Activated CD4-positive, alpha-beta T cell treated with anti-CD3 and anti-CD28 coated beads, Interleukin-2, amount 10 ng/mL, durations not matched to agents 24 days and 14 days (primary cell): ENCODE measurements at regions of chr11 and their contacts with region 1.

Region 1: DNA sequence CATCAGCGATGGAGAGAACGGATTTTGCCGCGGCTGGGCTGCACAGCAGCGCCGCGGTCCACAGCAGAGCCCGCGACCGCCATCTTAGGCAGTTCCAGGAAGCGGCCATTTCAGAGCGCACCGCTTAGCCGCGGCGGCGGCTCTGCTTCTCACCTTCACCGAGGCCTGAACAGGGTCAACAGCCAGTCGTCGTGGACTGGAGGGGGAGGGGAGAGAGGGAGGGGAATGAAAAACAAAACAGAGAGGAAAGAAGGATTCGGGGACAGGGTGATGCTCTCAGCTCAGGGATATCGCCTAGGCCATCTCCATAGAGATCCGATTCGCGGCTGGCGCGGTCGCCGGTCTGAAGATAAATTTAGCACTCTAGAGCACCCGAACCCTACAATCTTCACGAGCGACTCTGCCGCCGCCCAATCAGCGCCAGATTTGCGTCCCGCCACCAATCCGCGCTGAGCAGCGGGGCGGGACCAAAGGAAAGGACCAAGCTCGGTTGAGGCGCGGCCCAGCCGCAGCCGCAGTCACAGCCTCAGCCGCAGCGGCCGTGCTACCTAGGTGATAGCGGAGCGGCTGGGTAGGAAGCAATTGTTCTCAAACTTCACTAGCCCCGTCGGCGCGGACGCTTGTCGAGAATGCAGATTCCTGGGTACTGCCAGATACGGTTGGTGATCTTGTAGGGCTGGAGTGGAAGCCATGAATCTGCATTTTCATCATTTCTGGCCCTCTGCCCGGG is at the start of gene ZBED5:
- DNase-seq: peak; percentile 99
- H3K4me3 Mint-ChIP-seq: peak within 1 kb of the TSS; percentile 100
- H3K27ac Mint-ChIP-seq: peak within 1 kb of the TSS; percentile 100
- H3K4me1 Mint-ChIP-seq: peaks cover 35% of the 10 kb centered on the region
- H3K27me3 Mint-ChIP-seq: no peaks in the 10 kb centered on the region
- total RNA-seq, gene ZBED5: 41.8 and 43.1 TPM in 2 replicates

Region 2: DNA sequence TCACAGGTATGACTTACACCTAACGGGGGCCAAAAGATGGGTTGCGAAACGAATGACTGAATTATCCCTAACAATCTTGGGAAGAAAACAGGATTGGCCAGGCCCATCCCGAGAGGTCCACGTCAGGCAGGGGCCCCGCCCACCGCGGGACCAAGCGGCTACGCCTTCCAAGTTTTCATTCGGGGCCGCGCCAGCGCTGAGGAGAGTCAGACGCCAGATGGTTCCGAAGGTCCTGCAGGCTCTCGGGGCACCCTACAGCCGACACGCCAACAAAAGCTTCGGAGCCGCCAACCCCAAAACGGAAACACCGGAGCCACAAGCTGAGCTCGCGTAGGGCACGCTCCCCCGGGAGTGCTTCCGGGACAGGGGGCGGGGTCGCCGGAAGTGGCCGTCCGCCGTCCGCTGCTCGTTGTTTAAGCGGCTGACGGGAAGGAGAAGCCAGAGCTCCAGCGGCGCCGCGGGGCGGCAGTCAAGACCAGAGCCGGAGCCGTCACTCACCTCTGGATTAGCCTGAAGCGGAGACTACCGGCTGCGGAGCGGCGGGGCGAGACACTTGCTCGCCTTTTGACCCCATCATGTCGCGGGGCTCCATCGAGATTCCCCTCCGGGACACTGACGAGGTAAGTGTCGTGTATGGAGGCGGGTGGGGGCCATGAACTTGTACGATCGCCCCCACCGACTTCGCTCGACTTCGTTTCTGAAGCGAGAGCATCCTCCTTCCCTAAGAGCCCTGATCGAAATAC is 106.9 kb before region 1 on chr11 and contains the start of gene CTR9:
- intact Hi-C with region 1: loop called (anchors 2 kb)
- DNase-seq: peak; percentile 98
- H3K4me3 Mint-ChIP-seq: peak within 1 kb of the TSS; percentile 95
- H3K27ac Mint-ChIP-seq: peak within 1 kb of the TSS; percentile 89
- H3K4me1 Mint-ChIP-seq: peaks cover 32% of the 10 kb centered on the region
- H3K27me3 Mint-ChIP-seq: no peaks in the 10 kb centered on the region
- total RNA-seq, gene CTR9: 43.9 and 44.3 TPM in 2 replicates

Region 3: DNA sequence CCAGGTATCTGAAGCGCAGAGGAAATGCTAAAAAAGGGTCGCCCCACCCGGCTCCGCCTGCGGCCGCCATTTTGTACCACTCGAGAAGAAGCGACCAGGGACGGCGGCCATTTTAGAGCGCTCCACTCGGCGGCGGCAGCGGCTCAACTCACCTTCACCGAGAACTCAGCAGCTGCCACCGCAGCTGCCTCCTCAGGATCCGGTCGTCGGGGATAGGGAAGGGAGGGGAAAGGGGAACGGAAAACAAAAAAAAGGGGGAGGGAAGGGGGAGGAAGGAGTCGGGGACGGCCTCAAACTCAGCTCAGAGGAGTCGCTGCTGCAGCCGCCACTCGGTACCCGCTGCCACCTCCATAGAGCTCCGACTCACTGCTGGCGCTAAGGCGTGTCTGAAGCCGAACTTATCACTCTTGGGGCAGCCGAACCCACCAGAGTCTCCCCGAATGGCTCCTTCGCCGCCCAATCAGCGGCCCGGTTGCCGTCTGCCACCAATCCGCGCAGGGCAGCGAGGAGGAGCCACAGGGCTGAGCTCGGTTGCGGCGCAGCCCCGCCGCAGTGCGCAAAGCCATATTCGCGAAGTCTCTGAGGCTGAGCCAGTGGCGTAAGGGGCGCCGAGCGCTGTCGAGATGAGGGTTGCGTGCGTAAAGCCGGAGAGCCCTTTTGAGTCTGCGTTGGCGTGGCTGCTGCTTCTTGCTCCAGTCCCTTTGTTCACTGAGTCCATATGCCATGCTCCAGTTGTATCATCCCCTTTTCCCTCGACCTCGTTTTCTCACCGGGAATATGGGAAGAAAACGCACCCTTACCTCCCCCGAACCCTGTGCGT is 49.1 kb before region 1 on chr11 and contains the start of gene EIF4G2:
- intact Hi-C with region 1: loop called (anchors 1 kb)
- DNase-seq: peak; percentile 99
- H3K4me3 Mint-ChIP-seq: peak within 1 kb of the TSS; percentile 95
- H3K27ac Mint-ChIP-seq: peak within 1 kb of the TSS; percentile 98
- H3K4me1 Mint-ChIP-seq: peaks cover 31% of the 10 kb centered on the region
- H3K27me3 Mint-ChIP-seq: no peaks in the 10 kb centered on the region
- total RNA-seq, gene EIF4G2: 1,071 and 1,120 TPM in 2 replicates

Region 4: GRCh38 chr11:10878408-10879214 is 20.7 kb after region 1 on chr11:
- intact Hi-C with region 1: loop called (anchors 2 kb)
- DNase-seq: peak; percentile 79
- H3K4me3 Mint-ChIP-seq: no peak overlapping the region
- H3K27ac Mint-ChIP-seq: peak overlapping the region; percentile 6
- H3K4me1 Mint-ChIP-seq: peaks cover 8% of the 10 kb centered on the region
- H3K27me3 Mint-ChIP-seq: no peaks in the 10 kb centered on the region

Region 5: GRCh38 chr11:10900681-10901415 is 43.0 kb after region 1 on chr11:
- intact Hi-C with region 1: loop called (anchors 2 kb)
- DNase-seq: no peak
- H3K4me3 Mint-ChIP-seq: no peak overlapping the region
- H3K27ac Mint-ChIP-seq: peak overlapping the region; percentile 7
- H3K4me1 Mint-ChIP-seq: peaks cover 14% of the 10 kb centered on the region
- H3K27me3 Mint-ChIP-seq: no peaks in the 10 kb centered on the region

Region 6: DNA sequence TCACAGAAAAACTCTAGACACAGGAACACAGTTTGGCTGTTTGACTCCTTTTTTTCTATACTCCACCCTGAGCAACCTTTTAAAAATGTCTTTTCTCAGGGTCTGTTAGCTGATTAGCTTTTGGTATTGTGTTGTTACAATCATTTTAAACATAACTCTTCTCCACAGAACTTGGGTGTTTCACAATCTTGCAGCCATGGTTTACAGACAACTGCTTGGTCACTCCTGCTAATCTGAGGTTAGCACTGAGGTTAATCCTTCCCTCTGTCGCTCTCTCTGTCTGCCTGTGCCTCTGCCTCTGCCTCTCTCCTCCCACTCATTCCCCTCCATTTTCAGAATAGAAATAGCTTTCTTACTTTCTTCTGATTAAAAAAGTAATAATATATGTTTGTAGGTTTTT is 62.3 kb after region 1 on chr11:
- intact Hi-C with region 1: no loop called
- DNase-seq: no peak
- H3K4me3 Mint-ChIP-seq: no peak overlapping the region
- H3K27ac Mint-ChIP-seq: no peak overlapping the region
- H3K4me1 Mint-ChIP-seq: no peaks in the 10 kb centered on the region
- H3K27me3 Mint-ChIP-seq: peaks cover 8% of the 10 kb centered on the region

Region 7: GRCh38 chr11:11078344-11079086 is 220.6 kb after region 1 on chr11:
- intact Hi-C with region 1: no loop called
- DNase-seq: no peak
- H3K4me3 Mint-ChIP-seq: no peak overlapping the region
- H3K27ac Mint-ChIP-seq: no peak overlapping the region
- H3K4me1 Mint-ChIP-seq: no peaks in the 10 kb centered on the region
- H3K27me3 Mint-ChIP-seq: peaks cover 4% of the 10 kb centered on the region